ENCODE measurements at regions of chr20 and their contacts with region 1.

Region 1: DNA sequence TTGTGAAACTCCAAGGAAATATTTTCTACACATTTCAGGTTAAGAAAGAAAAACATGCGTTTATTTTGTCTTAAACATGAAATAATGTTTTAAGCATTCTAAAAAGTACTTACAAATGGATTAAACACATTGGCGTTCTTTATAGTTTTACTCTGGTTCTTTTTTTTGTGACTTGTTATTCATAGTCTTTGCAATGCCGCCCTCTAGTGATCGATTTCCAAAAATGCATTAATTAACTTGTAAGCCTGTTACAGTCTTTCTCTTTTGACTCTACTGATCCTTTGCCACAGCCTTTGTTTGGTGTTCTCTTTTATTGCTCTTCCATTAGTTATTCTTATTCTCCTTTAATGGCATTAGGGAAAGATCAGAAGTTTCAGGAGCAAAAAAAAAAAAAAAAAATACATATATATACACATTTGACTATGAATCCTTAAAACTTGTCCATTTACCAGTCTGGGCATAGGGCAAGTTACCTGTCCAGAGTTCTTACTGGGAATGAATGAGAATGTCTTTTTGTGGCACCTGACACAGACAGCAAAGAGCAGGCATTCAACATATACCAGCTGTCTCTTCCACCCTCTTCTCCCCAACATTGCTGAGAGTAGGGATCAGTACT is 59.9 kb downstream of the MACROD2 start:
- DNase-seq: peak; percentile 72
- H3K4me3 ChIP-seq: no peak overlapping the region
- CTCF ChIP-seq: peak; percentile 32

Region 2: DNA sequence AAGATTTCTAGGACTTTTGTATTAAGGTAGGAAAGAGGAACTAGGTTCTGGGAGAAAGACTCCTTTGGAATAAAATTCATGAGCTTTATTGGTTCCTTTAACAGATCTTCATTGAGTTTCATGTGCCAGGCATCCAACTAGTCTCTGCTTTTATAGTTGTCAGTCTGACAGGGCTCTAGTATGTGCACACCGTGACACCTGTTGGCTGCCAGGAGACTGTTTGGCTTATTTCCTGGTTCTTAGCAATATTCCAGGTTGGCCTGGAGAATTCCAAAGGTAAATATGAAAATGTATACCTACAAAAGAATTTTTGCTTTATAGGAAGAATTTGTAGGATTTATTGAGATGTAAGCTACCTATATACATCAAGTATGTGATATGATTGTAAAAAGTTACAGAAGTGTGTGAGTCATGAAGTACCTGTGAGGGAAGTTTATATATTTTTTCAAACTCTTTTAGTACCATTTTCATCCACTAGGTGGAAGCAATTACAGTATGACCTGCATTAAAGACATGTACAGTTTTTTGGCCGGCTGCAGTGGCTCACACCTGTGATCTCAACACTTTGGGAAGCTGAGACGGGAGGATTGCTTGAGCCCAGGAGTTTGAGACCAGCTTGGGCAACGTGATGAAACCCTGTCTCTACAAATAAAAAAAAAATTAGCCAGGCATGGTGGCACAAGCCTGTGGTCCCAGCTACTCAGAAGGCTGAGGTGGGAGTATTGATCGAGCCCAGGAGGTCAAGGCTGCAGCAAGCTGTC is 235.2 kb before region 1 on chr20:
- in situ Hi-C with region 1: loop called (anchors 25 kb)
- DNase-seq: peak; percentile 48
- H3K4me3 ChIP-seq: no peak overlapping the region
- CTCF ChIP-seq: peak; percentile 41